Pancreas (tissue), 10 donors: ENCODE measurements at regions of chr12 and their contacts with region 1.

Region 1: GRCh38 chr12:95117178-95117599 is 43.8 kb upstream of the NR2C1 start:
- DNase-seq: peak in 4 of 6 donors; percentile 33 to 73 (median 60)
- ATAC-seq: peak; percentile 86 to 95 (median 92)
- H3K4me3 ChIP-seq: no peak overlapping the region
- H3K27ac ChIP-seq: peak overlapping the region in 2 of 4 donors; percentile 20 to 64
- H3K4me1 ChIP-seq: no peaks in the 10 kb centered on the region
- H3K27me3 ChIP-seq: no peaks in the 10 kb centered on the region
- CTCF ChIP-seq: peak; percentile 35 to 69 (median 65)

Region 2: GRCh38 chr12:94699801-94700200 is 417.4 kb before region 1 on chr12:
- intact Hi-C with region 1: no loop called
- DNase-seq: no peak
- ATAC-seq: peak in 3 of 4 donors; percentile 16 to 41 (median 35)
- H3K4me3 ChIP-seq: no peak overlapping the region
- H3K27ac ChIP-seq: no peak overlapping the region
- H3K4me1 ChIP-seq: peaks cover 3 to 8% (median 3%) of the 10 kb centered on the region in 3 donors
- H3K27me3 ChIP-seq: no peaks in the 10 kb centered on the region
- CTCF ChIP-seq: no peak

Region 3: GRCh38 chr12:95224202-95225170 is 107.3 kb after region 1 on chr12:
- intact Hi-C with region 1: loop called in 1 of 3 experiments (anchors 10 kb)
- DNase-seq: no peak
- ATAC-seq: peak in 2 of 4 donors; percentile 20 to 27
- H3K4me3 ChIP-seq: no peak overlapping the region
- H3K27ac ChIP-seq: no peak overlapping the region
- H3K4me1 ChIP-seq: peaks cover 0 to 6% (median 4%) of the 10 kb centered on the region in 3 donors
- H3K27me3 ChIP-seq: no peaks in the 10 kb centered on the region
- CTCF ChIP-seq: no peak

Region 4: GRCh38 chr12:95336390-95337067 is 219.3 kb after region 1 on chr12:
- intact Hi-C with region 1: loop called in 2 of 3 experiments (anchors 5 to 10 kb)
- DNase-seq: peak; percentile 71 to 88 (median 76)
- ATAC-seq: peak; percentile 99 to 100 (median 99)
- H3K4me3 ChIP-seq: no peak overlapping the region
- H3K27ac ChIP-seq: peak overlapping the region in 2 of 4 donors; percentile 42 to 43
- H3K4me1 ChIP-seq: peaks cover 0 to 7% (median 0%) of the 10 kb centered on the region in 3 donors
- H3K27me3 ChIP-seq: no peaks in the 10 kb centered on the region
- CTCF ChIP-seq: peak; percentile 33 to 78 (median 73)

Region 5: GRCh38 chr12:95532851-95533250 is 415.7 kb after region 1 on chr12:
- intact Hi-C with region 1: loop called in 2 of 3 experiments (anchors 10 kb)
- DNase-seq: no peak
- ATAC-seq: no peak
- H3K4me3 ChIP-seq: no peak overlapping the region
- H3K27ac ChIP-seq: no peak overlapping the region
- H3K4me1 ChIP-seq: no peaks in the 10 kb centered on the region
- H3K27me3 ChIP-seq: no peaks in the 10 kb centered on the region
- CTCF ChIP-seq: no peak